ENCODE measurements at regions of chr6 and their contacts with region 1.

Region 1: DNA sequence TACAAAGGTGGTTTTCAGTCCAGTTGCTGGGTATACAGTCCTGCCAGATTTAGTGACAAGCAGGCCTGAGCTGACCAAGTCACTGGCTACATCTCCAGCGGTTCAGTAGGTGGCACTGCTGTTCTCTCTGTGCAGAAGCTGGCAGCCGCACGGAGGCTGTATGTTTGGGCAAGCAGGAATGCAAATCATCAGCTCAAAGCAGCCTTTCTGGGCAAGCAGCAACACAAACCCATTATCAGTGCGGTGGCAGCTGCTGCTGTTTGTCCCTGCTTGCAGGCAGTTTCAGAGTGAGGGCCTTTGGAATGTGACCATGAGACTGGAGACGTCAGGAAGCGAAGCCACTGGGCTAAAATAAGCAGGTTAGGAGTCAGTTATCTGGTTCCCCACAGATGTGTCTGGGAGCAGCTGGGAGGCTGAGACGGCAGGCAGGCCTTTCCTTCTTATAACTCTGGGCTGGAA is 72.5 kb downstream of the TXLNB start:
- DNase-seq: peak; percentile 81
- ATAC-seq: peak; percentile 99
- H3K4me3 Mint-ChIP-seq: no peak overlapping the region
- H3K27ac Mint-ChIP-seq: peak overlapping the region; percentile 69
- H3K4me1 Mint-ChIP-seq: peaks cover 10% of the 10 kb centered on the region
- H3K27me3 Mint-ChIP-seq: no peaks in the 10 kb centered on the region

Region 2: DNA sequence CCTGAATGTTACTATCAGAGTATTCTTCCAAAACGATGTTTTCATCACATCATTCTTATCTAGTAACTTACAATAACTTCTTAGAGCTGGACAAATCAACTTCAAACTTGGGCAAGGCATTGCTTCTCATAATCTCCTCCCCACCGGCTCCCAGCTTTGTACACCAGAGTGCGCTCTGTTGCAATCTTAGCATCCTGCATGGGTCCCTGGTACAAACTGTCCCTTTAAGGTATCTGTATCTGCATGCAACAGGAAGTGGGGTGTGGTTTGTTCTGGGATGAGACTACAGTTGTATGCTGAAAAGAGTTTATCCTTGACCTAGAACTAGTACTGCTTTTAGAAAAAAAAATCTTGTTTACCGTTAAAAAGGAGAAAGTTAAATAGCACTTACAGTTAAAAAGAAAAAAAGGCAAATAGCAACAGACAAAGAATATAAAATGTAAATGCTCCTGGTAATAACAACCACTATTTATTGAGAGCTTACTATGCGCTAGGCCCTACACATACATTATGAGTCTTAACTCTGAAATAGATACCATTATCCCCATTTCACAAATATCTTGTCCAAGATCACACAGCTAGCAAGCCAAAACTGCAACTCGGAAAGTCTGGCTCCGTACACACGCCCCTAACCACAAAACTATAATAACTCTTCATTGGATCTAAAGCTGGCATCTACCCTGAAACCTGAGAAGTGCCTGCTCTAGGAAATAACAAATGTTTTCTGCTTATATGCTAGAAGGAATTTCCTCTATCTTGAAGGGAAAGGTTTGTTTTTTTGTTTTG is 94.2 kb before region 1 on chr6:
- CTCF ChIA-PET with region 1: interaction called, 43 read pairs
- POLR2A ChIA-PET with region 1: no interaction called
- DNase-seq: peak; percentile 93
- ATAC-seq: peak; percentile 99
- H3K4me3 Mint-ChIP-seq: peak overlapping the region; percentile 67
- H3K27ac Mint-ChIP-seq: peak overlapping the region; percentile 93
- H3K4me1 Mint-ChIP-seq: peaks cover 41% of the 10 kb centered on the region
- H3K27me3 Mint-ChIP-seq: no peaks in the 10 kb centered on the region

Region 3: DNA sequence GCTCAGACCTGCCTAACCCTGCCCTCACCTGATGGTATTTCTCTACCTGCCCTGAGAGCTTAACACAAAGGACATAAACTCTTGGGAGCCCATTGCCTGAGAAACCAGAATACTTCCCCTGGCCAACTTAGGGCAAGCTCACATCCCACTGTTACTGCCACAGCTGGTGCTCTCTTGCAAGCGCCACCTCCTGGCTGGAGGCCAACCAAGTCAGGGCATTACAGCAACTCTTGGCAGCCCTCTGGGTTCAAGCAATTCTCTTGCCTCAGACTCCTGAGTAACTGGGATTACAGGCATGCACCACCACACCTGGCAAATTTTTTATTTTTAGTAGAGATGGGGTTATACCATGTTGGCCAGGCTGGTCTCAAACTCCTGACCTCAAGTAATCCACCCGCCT is 14.3 kb before region 1 on chr6:
- CTCF ChIA-PET with region 1: interaction called, 14 read pairs
- POLR2A ChIA-PET with region 1: no interaction called
- DNase-seq: no peak
- ATAC-seq: no peak
- H3K4me3 Mint-ChIP-seq: no peak overlapping the region
- H3K27ac Mint-ChIP-seq: no peak overlapping the region
- H3K4me1 Mint-ChIP-seq: no peaks in the 10 kb centered on the region
- H3K27me3 Mint-ChIP-seq: no peaks in the 10 kb centered on the region

Region 4: DNA sequence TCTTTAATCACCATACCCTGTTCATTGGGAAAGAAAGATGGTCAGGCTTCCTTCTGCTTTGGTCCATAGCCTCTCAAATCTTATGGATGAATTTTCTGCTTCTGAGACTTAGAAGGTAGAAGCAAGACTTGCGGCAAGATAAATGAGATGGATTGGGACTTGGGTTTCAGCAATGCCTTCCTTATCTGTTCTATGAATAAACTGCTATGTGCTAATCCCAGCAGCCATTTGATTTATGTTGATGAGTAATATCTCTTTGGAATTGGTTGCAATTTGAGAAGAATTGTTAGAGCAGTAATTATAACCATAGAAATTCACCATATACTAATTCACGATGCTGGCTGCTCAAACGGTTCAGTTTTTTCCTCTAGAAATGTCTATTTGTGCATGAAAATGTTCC is 24.2 kb after region 1 on chr6:
- CTCF ChIA-PET with region 1: interaction called, 14 read pairs
- POLR2A ChIA-PET with region 1: no interaction called
- DNase-seq: no peak
- ATAC-seq: no peak
- H3K4me3 Mint-ChIP-seq: no peak overlapping the region
- H3K27ac Mint-ChIP-seq: no peak overlapping the region
- H3K4me1 Mint-ChIP-seq: peaks cover 12% of the 10 kb centered on the region
- H3K27me3 Mint-ChIP-seq: no peaks in the 10 kb centered on the region

Region 5: GRCh38 chr6:139262519-139263300 is 43.4 kb after region 1 on chr6:
- CTCF ChIA-PET with region 1: interaction called, 13 read pairs
- POLR2A ChIA-PET with region 1: no interaction called
- DNase-seq: no peak
- ATAC-seq: peak; percentile 92
- H3K4me3 Mint-ChIP-seq: peak overlapping the region; percentile 47
- H3K27ac Mint-ChIP-seq: peak overlapping the region; percentile 8
- H3K4me1 Mint-ChIP-seq: peaks cover 13% of the 10 kb centered on the region
- H3K27me3 Mint-ChIP-seq: no peaks in the 10 kb centered on the region

Region 6: DNA sequence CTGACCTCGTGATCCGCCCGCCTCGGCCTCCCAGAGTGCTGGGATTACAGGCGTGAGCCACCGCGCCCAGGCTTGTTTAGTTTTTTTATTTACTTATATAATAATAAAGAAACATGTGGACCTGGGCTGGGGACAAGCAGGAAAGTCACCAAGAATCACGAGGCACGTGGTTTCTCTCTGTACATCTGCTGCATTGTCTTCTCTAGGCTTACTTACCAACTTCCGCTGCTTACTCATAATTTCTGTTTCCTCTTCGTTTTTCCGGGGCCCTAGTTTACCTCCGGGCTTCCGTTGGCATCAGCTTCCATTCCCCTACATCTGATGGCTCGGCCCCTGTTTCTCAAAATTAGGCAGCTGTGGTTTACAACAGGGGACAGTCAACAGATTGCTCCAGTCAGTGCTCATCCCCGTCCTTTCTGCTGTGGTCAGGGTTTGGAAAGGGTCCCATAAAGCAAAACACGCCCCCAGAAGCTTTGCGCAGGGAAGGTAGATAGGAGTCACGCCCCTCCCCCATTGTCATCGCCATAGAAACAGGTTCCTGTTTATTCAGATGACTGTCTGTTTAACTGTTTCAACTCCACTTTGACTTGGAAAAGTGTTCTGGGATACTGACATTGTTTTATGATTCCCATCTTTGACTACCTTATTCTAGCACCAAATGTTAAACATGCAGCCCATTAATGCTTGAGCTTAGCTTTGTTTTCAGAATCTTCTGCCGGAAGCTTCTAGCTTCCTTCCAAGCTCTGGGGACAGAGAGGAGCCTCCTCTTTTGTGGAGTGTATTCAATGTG is 104.4 kb after region 1 on chr6:
- CTCF ChIA-PET with region 1: interaction called, 13 read pairs
- POLR2A ChIA-PET with region 1: no interaction called
- DNase-seq: peak; percentile 87
- ATAC-seq: peak; percentile 91
- H3K4me3 Mint-ChIP-seq: peak overlapping the region; percentile 74
- H3K27ac Mint-ChIP-seq: peak overlapping the region; percentile 99
- H3K4me1 Mint-ChIP-seq: peaks cover 23% of the 10 kb centered on the region
- H3K27me3 Mint-ChIP-seq: no peaks in the 10 kb centered on the region

Region 7: DNA sequence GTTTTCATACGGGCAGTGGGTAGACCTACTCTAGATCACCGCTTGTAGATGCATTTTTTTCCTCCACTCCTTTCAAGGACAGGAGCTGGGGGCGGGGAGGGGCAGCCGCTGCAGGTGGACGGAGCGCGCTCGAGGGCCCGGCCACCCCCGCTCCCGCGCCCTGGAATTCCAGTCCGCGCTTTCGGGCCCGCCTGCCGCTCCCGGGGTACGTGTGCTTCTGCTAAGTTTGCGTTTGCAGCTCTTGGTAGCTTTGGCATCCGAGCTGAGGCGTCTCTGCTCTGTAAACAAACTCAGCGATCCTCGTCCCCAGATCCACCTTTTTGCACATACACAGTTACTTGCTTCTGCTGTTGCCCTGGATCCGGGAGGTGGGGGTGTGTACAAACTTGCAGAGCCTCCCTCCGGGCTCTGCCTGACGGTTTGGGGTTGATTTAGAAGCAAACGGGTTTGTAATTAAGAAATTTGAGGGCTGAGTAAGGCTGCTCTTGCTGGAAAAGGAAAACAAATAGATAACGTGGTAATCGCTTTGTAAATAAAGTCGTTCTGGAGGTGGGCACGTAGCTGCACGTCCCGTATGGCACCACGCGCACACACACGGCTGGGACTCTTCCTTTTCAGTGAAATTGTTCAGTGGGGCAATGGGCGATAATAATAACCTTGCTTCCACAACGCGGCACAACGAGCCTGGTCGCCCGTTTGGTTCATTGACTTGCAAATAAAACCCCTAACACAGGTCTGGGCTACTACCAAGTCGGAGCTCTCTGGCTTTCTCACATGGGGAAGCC is 156.1 kb after region 1 on chr6:
- CTCF ChIA-PET with region 1: interaction called, 110 read pairs
- POLR2A ChIA-PET with region 1: interaction called, 4 read pairs
- DNase-seq: peak; percentile 88
- ATAC-seq: peak; percentile 54
- H3K4me3 Mint-ChIP-seq: peak overlapping the region; percentile 99
- H3K27ac Mint-ChIP-seq: peak overlapping the region; percentile 100
- H3K4me1 Mint-ChIP-seq: peaks cover 34% of the 10 kb centered on the region
- H3K27me3 Mint-ChIP-seq: no peaks in the 10 kb centered on the region